ENCODE measurements at regions of chrX and their contacts with region 1.

Region 1: GRCh38 chrX:136711147-136711546 is 63.2 kb downstream of the CD40LG start:
- DNase-seq: peak; percentile 69
- ATAC-seq: peak; percentile 97
- H3K4me3 ChIP-seq: no peak overlapping the region
- H3K27ac ChIP-seq: peak overlapping the region; percentile 86
- H3K4me1 ChIP-seq: peaks cover 8% of the 10 kb centered on the region
- H3K27me3 ChIP-seq: no peaks in the 10 kb centered on the region
- CTCF ChIP-seq: peak; percentile 82

Region 2: DNA sequence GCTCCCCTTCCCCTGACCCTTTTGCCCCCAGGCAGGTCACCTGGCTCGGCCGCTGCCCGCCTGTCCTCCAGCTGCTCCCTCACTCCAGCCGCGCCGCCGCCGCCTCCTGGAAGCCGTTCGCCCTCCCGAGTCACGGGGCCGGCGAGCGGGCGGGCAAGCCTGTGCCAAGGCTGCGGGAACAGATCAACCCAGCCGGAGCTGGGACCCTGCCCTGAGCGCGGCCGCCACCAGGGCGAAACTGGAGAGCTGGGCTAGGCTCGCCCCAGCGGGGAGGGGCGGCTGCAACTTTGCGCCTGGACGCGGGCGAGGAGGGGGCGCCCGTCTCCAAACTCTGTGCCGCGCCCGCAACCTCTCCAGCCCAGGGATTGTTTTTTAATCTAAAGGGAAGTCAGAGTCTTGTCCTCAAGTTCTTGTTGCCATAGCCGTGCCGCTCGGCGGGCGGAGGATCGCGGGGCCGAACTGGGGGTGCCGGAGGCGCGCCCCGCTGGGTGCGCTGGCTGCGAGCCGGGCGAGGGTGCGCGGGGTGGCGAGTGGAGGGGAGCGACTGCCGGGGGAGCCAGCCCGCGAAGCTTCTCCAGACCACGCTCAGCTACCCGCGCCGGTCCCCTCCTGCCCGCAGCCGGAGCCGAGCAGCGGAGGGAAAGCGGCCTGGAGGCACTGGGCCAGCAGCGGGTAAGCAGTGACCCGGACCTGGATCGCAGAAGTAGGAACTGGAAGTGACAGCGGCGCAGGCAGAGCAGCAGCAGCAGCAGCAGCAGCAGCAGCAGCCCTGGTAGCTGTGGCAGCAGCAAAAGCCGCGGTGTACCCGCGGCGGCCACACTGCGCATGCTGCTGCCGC is 56.2 kb after region 1 on chrX:
- CTCF ChIA-PET with region 1: no interaction called
- POLR2A ChIA-PET with region 1: no interaction called
- intact Hi-C with region 1: loop called (anchors 5 kb)
- DNase-seq: peak; percentile 59
- ATAC-seq: peak; percentile 73
- H3K4me3 ChIP-seq: peak overlapping the region; percentile 92
- H3K27ac ChIP-seq: peak overlapping the region; percentile 44
- H3K4me1 ChIP-seq: peaks cover 20% of the 10 kb centered on the region
- H3K27me3 ChIP-seq: no peaks in the 10 kb centered on the region
- CTCF ChIP-seq: peak; percentile 46

Region 3: GRCh38 chrX:136780763-136781162 is 69.6 kb after region 1 on chrX and contains the start of gene ARHGEF6:
- CTCF ChIA-PET with region 1: no interaction called
- POLR2A ChIA-PET with region 1: no interaction called
- intact Hi-C with region 1: loop called (anchors 5 kb)
- DNase-seq: peak; percentile 21
- ATAC-seq: peak; percentile 39
- H3K4me3 ChIP-seq: peak within 1 kb of the TSS; percentile 58
- H3K27ac ChIP-seq: peak within 1 kb of the TSS; percentile 55
- H3K4me1 ChIP-seq: peaks cover 45% of the 10 kb centered on the region
- H3K27me3 ChIP-seq: no peaks in the 10 kb centered on the region
- CTCF ChIP-seq: no peak
- total RNA-seq, gene ARHGEF6: 2.1 and 3.3 TPM in 2 replicates

Region 4: DNA sequence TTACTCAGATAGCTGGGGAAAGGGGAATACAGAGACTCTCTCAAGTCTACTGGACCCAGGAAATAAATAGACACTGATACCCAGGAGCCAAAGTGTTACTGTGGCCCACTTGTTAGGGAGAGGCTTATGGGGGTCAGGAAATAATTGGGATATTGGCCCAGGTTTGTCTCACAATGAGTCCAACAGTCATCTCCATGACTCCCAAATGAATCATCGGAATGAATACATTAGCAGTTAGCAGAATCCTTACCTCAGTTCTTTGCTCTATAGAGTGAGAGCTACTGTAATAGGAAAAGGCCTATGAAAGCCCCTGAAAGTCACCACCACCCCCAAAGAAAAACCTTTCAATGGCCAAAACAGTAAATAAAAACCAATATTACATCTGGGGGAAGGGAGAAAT is 112.0 kb after region 1 on chrX:
- CTCF ChIA-PET with region 1: no interaction called
- POLR2A ChIA-PET with region 1: no interaction called
- intact Hi-C with region 1: loop called (anchors 5 kb)
- DNase-seq: peak; percentile 67
- ATAC-seq: peak; percentile 93
- H3K4me3 ChIP-seq: no peak overlapping the region
- H3K27ac ChIP-seq: peak overlapping the region; percentile 44; the same call in 1 of the 2 replicates
- H3K4me1 ChIP-seq: peaks cover 11% of the 10 kb centered on the region; the same call in 1 of the 2 replicates
- H3K27me3 ChIP-seq: no peaks in the 10 kb centered on the region
- CTCF ChIP-seq: no peak

Region 5: DNA sequence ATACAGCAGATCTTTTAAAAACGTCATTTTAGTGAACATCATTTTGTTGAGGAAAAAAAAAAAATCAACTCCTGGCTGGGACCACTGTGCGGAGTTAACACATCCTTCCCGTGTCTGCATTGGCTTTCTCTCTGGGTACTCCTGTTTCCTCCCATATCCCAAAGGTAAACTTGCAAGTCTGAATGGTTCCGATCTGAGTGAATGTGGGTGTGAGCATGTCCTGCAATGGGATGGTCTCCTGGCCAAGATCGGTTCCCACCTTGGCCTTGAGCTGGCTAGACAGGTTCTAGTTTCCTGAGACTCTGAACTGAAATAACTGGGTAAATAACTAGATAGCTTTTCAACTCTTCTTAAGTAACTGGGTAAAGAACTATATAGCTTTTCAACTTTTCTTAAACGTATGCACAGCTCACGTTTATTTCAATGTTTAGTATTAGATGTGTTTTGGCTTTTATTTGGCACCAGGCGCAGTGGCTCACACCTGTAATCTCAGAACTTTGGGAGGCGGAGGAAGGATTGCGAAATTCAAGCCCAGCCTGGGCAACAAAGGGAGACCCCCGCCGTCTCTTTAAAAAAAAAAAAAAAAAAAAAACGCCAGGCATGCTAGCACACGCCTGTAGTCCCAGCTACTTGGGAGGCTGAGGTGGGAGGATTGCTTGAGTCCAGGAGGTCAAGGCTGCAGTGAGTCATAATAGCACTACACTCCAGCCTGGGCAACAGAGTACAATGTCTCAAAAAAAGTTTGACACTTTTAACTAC is 155.4 kb after region 1 on chrX:
- CTCF ChIA-PET with region 1: no interaction called
- POLR2A ChIA-PET with region 1: no interaction called
- intact Hi-C with region 1: loop called (anchors 10 kb)
- DNase-seq: no peak
- ATAC-seq: no peak
- H3K4me3 ChIP-seq: no peak overlapping the region
- H3K27ac ChIP-seq: no peak overlapping the region
- H3K4me1 ChIP-seq: no peaks in the 10 kb centered on the region
- H3K27me3 ChIP-seq: no peaks in the 10 kb centered on the region
- CTCF ChIP-seq: no peak

Region 6: GRCh38 chrX:136909706-136910564 is 198.8 kb after region 1 on chrX:
- CTCF ChIA-PET with region 1: interaction called, 3 read pairs
- POLR2A ChIA-PET with region 1: no interaction called
- intact Hi-C with region 1: loop called (anchors 5 kb)
- DNase-seq: peak; percentile 83
- ATAC-seq: peak; percentile 75
- H3K4me3 ChIP-seq: peak overlapping the region; percentile 96
- H3K27ac ChIP-seq: peak overlapping the region; percentile 67
- H3K4me1 ChIP-seq: peaks cover 14% of the 10 kb centered on the region
- H3K27me3 ChIP-seq: no peaks in the 10 kb centered on the region
- CTCF ChIP-seq: no peak

Region 7: GRCh38 chrX:136920001-136920400 is 208.9 kb after region 1 on chrX:
- CTCF ChIA-PET with region 1: interaction called, 3 read pairs
- POLR2A ChIA-PET with region 1: no interaction called
- intact Hi-C with region 1: loop called (anchors 1 kb)
- DNase-seq: no peak
- ATAC-seq: no peak
- H3K4me3 ChIP-seq: no peak overlapping the region
- H3K27ac ChIP-seq: no peak overlapping the region
- H3K4me1 ChIP-seq: no peaks in the 10 kb centered on the region
- H3K27me3 ChIP-seq: no peaks in the 10 kb centered on the region
- CTCF ChIP-seq: no peak